PC-9 (cell line): ENCODE measurements at regions of chr5 and their contacts with region 1.

Region 1: GRCh38 chr5:139787568-139788293 is 7.9 kb upstream of the PSD2 start:
- DNase-seq: peak; percentile 47 to 86
- H3K4me3 ChIP-seq: peak overlapping the region; percentile 74
- H3K27ac ChIP-seq: no peak overlapping the region
- H3K4me1 ChIP-seq: no peaks in the 10 kb centered on the region
- H3K27me3 ChIP-seq: peaks cover 36% of the 10 kb centered on the region; the same call in 1 of the 2 replicates
- CTCF ChIP-seq: peak; percentile 97

Region 2: GRCh38 chr5:139642891-139643871 is 144.6 kb before region 1 on chr5:
- CTCF ChIA-PET with region 1: interaction called, 5 read pairs
- POLR2A ChIA-PET with region 1: no interaction called
- intact Hi-C with region 1: loop called (anchors 1 kb)
- DNase-seq: peak; percentile 79 to 85
- H3K4me3 ChIP-seq: peak overlapping the region; percentile 31; the same call in 1 of the 2 replicates
- H3K27ac ChIP-seq: peak overlapping the region; percentile 57
- H3K4me1 ChIP-seq: peaks cover 84% of the 10 kb centered on the region
- H3K27me3 ChIP-seq: no peaks in the 10 kb centered on the region
- CTCF ChIP-seq: no peak

Region 3: DNA sequence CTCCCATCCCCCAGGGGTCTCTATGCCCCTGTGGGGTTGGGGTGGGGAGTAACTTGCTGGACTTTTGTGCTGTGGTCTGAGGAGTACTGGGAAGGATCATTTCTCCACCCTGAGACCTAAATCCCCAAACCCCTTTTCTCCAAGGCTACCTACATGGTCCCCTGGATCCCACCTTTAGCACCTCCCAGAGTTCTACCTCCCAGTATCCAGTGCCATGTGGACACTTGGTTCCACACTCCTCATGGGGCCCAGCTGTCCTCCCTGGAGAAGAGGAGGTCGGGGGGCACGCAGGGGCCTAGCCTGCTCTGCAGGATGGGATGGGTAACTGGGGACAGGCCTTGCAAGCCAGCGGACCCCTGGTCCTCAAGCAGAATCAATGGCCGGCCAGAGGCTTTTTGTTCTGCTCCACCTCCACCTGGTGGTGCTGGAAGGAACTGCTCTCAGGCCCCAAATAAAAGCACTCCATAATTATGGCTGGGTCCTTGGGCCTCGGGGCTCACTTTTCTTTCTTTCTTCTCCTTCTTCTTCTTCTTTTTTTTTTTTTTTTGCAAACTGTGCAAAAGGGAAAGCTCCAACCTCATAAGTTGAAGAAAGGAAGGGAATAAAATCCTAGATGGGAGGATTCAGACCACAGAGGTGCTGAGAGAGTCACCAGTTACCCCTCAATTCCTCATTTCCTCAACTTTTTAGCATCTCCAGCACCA is 76.3 kb after region 1 on chr5:
- CTCF ChIA-PET with region 1: no interaction called
- POLR2A ChIA-PET with region 1: no interaction called
- intact Hi-C with region 1: loop called (anchors 1 kb)
- DNase-seq: peak in 1 of 2 experiments; percentile 48
- H3K4me3 ChIP-seq: no peak overlapping the region
- H3K27ac ChIP-seq: no peak overlapping the region
- H3K4me1 ChIP-seq: peaks cover 6% of the 10 kb centered on the region
- H3K27me3 ChIP-seq: peaks cover 4% of the 10 kb centered on the region; the same call in 1 of the 2 replicates
- CTCF ChIP-seq: peak; percentile 92

Region 4: GRCh38 chr5:140113699-140114263 is 326.1 kb after region 1 on chr5 and contains the start of gene PURA:
- CTCF ChIA-PET with region 1: no interaction called
- POLR2A ChIA-PET with region 1: no interaction called
- intact Hi-C with region 1: no loop called
- DNase-seq: peak; percentile 80 to 94
- H3K4me3 ChIP-seq: peak within 1 kb of the TSS; percentile 74
- H3K27ac ChIP-seq: peak within 1 kb of the TSS; percentile 56
- H3K4me1 ChIP-seq: peaks cover 51% of the 10 kb centered on the region
- H3K27me3 ChIP-seq: no peaks in the 10 kb centered on the region
- CTCF ChIP-seq: no peak
- total RNA-seq, gene PURA: 13.6 and 17.9 TPM in 2 replicates

Region 5: GRCh38 chr5:140157032-140157803 is 369.5 kb after region 1 on chr5:
- CTCF ChIA-PET with region 1: no interaction called
- POLR2A ChIA-PET with region 1: no interaction called
- intact Hi-C with region 1: loop called (anchors 1 kb)
- DNase-seq: peak; percentile 58 to 80
- H3K4me3 ChIP-seq: no peak overlapping the region
- H3K27ac ChIP-seq: no peak overlapping the region
- H3K4me1 ChIP-seq: peaks cover 4% of the 10 kb centered on the region
- H3K27me3 ChIP-seq: no peaks in the 10 kb centered on the region
- CTCF ChIP-seq: peak; percentile 95

Region 6: GRCh38 chr5:140357726-140358093 is 570.0 kb after region 1 on chr5:
- CTCF ChIA-PET with region 1: no interaction called
- POLR2A ChIA-PET with region 1: no interaction called
- intact Hi-C with region 1: loop called (anchors 2 kb)
- DNase-seq: peak; percentile 72 to 78
- H3K4me3 ChIP-seq: peak overlapping the region; percentile 24; the same call in 1 of the 2 replicates
- H3K27ac ChIP-seq: no peak overlapping the region
- H3K4me1 ChIP-seq: no peaks in the 10 kb centered on the region
- H3K27me3 ChIP-seq: no peaks in the 10 kb centered on the region
- CTCF ChIP-seq: peak; percentile 89